ENCODE measurements at regions of chr6 and their contacts with region 1.

Region 1: DNA sequence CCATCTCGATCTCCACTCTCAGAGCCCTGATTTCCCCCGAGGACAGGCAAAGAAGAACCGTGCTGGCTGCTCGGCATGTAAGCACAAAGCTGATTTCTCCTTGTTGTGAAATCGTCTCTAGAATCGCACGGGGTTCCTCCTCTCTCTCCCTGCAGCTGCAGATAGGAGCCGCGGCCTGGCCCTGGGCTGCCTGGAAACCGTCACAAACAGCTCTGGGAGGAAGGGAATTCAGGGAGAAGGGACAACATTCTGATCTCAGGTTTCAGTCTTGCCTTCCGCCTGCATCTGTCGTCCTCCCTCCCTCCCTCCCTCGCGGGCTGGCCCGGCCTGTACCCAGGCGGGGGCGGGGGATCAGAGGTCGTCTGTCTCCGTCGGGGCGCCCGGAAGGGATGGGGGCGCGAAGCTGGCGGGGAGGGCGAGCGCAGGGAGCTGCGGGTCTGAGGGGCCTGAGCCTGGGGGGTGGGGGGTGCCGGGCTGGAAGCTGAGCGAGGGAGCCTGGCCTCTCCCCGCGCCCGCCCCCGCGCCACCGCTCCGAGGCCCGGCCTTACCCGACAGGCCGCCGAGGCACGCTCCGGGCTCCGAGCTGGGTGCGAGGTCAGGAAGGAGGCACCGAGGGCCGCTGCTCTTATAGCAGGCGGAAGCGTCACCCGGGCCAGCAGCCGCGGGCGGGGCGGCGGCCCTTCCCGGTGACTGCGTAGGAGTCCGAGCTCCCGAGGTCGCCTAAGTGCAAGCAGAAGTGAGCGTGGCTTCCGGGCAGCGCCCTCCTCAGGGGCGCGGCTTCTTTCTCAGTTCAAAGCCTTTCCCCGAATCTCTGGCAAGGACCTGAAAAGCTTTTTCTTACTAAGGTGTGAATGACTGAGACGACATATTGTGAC is at the start of gene SERPINB1:
- DNase-seq: peak; percentile 47
- CTCF ChIP-seq: no peak

Region 2: DNA sequence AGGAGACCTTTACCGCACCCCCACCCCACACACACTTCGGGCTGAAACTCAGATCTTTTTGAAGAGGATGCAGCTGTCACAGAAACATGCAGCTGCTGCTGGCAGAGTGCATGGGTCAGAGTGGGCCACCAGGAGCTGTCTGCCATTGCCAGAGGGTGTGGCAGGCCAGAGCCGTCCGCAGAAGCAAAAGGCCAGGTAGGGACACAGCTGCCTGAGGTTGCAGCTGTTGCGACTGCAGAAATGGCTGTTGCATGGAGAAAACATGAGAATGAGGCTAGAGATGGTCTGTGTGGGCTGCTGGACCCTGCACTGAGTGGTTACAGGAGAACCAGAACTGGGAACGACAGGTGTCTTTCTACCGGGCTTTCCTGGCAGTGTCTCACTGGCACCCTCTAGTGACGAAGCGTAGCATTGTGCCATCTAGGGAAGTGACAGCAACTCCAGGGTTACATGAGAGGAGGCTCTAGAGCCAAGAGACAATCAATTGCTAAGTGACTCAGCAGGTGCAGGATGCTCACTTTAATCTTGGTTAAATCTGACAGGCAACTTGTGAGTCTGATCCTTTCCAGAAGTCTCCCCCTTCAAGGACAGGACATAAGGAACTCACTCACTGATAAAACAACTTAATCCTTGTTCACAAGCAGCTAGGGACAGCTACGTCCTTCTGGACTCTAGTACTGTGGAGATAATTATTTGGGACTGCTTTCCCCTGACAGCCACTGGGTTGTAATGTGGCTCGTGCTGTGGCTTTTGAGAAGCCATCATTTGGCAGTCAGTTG is 90.7 kb after region 1 on chr6:
- in situ Hi-C with region 1: loop called (anchors 5 kb)
- DNase-seq: peak; percentile 87
- CTCF ChIP-seq: peak; percentile 97